ENCODE measurements at regions of chr2 and their contacts with region 1.

Region 1: GRCh38 chr2:230968921-230969658 is 26.8 kb upstream of the SPATA3 start:
- DNase-seq: no peak
- ATAC-seq: peak; percentile 21
- H3K4me3 Mint-ChIP-seq: peak overlapping the region; percentile 61
- H3K27ac Mint-ChIP-seq: peak overlapping the region; percentile 80
- H3K4me1 Mint-ChIP-seq: peaks cover 40% of the 10 kb centered on the region
- H3K27me3 Mint-ChIP-seq: peaks cover 26% of the 10 kb centered on the region

Region 2: GRCh38 chr2:230942920-230943896 is 25.9 kb before region 1 on chr2:
- CTCF ChIA-PET with region 1: no interaction called
- DNase-seq: peak; percentile 88
- ATAC-seq: peak; percentile 77
- H3K4me3 Mint-ChIP-seq: peak overlapping the region; percentile 79
- H3K27ac Mint-ChIP-seq: peak overlapping the region; percentile 89
- H3K4me1 Mint-ChIP-seq: peaks cover 55% of the 10 kb centered on the region
- H3K27me3 Mint-ChIP-seq: peaks cover 22% of the 10 kb centered on the region

Region 3: DNA sequence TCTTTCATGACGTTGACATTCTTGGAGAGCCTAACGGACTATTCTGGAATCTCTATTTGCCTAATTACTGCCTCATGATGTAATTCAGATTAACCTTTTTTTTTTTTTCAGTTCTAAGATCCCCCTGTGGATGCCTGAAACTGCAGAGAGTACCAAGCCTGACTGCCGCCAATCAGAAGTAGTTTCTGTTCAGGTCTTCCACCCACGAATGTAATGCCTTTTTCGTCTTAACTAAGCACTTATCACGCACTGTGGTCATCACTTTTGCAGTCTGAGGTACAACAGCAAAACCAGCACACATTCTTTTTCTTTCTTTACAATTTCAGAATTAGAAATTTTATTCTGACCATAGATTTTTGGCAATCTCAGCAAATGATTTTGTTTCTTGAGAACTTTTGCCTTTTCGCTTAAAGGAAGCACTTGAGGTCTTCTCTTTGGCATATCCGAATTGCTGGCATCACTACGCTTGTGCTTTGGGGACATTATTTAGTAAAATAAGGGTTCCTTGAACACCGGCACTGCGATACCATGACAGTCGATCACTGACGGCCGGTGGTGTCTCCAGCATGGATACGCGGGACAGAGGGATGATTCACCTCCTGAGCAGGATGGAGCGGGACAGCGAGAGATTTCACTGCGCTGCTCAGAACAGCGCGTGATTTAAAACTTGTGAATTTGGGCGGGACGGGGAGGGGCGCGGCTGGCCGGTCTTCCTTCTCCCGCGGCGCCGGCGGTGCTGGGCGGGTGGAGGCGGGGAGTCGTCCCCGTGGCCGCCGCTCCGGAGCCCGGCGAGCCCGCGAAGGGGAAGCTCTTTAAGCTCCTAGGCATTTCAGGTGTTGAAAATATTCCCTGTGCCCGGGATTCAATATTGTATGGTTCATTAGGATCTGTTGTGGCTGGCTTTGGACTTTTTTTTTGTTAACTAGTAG is 12.0 kb before region 1 on chr2:
- CTCF ChIA-PET with region 1: interaction called, 12 read pairs
- DNase-seq: peak; percentile 80
- ATAC-seq: peak; percentile 88
- H3K4me3 Mint-ChIP-seq: peak overlapping the region; percentile 76
- H3K27ac Mint-ChIP-seq: peak overlapping the region; percentile 95
- H3K4me1 Mint-ChIP-seq: peaks cover 68% of the 10 kb centered on the region
- H3K27me3 Mint-ChIP-seq: peaks cover 65% of the 10 kb centered on the region

Region 4: GRCh38 chr2:231056453-231057424 is 87.6 kb after region 1 on chr2 and contains the start of gene PSMD1:
- CTCF ChIA-PET with region 1: no interaction called
- DNase-seq: peak; percentile 95
- ATAC-seq: peak; percentile 86
- H3K4me3 Mint-ChIP-seq: peak within 1 kb of the TSS; percentile 86
- H3K27ac Mint-ChIP-seq: peak within 1 kb of the TSS; percentile 100
- H3K4me1 Mint-ChIP-seq: peaks cover 62% of the 10 kb centered on the region
- H3K27me3 Mint-ChIP-seq: peaks cover 8% of the 10 kb centered on the region
- total RNA-seq, gene PSMD1: 89.1 to 128 TPM